BJ (cell line): ENCODE measurements at regions of chr15 and their contacts with region 1.

Region 1: DNA sequence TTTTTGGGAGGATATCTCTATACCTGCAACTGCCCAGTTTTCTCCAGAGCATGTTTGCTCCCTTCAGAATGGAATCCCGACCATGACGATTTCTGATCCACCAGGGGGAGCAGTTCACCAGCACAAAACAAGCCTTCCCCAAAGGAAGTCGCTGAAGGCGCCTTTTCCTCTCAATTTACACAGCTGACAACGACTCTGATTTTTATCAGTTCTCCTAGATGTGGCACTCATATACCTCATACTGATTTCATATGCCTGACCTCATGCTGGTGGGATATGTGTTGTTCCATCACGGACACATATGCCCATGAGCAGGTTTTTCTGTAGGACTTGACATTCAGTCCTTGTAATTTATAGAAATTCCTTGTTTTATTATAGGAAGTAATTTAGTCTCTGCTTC is 1028.2 kb downstream of the MCTP2 start:
- DNase-seq: no peak
- H3K4me3 ChIP-seq: no peak overlapping the region
- H3K27me3 ChIP-seq: no peaks in the 10 kb centered on the region
- CTCF ChIP-seq: peak; percentile 77

Region 2: DNA sequence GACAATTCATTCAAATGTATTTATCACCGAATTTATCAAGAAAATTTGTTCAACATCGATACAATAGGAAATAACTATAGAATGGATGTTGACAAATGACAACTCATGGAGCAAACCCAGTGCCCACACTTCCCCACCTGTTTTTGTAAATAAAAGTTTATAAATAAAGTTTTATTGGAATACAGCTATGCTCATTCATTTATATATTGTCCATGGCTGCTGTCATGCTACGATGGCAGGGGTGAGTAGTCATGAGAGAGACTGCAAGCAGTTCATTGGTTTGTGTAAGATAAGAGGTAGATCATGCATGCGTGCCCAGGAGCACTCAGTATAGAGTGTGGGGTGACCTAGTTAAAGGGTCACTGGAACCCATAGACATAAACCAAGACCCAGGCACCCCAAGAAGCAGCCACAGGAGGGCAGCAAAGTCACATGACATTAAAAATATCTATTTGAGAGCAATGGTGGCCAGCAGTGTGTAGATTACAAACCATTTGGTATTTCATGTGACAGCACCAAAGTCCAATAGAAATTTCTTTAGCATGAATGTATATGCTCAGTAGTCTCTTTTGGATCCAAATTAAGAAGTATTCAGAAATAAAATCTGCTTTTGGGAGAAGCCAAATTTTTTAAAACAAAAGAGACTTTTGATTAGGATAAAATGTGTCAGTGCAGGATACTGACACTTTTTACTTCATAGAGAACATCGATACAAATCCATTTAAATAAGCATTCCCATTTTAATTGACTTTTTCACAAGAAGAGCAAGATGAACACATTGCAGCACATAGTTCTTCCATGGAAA is 233.4 kb before region 1 on chr15:
- CTCF ChIA-PET with region 1: interaction called, 16 read pairs
- POLR2A ChIA-PET with region 1: no interaction called
- DNase-seq: no peak
- H3K4me3 ChIP-seq: no peak overlapping the region
- H3K27me3 ChIP-seq: no peaks in the 10 kb centered on the region
- CTCF ChIP-seq: peak; percentile 85

Region 3: GRCh38 chr15:95152741-95153140 is 106.8 kb before region 1 on chr15:
- CTCF ChIA-PET with region 1: no interaction called
- POLR2A ChIA-PET with region 1: no interaction called
- DNase-seq: no peak
- H3K4me3 ChIP-seq: no peak overlapping the region
- H3K27me3 ChIP-seq: no peaks in the 10 kb centered on the region
- CTCF ChIP-seq: no peak

Region 4: GRCh38 chr15:95287720-95288103 is 28.2 kb after region 1 on chr15:
- CTCF ChIA-PET with region 1: interaction called, 17 read pairs
- POLR2A ChIA-PET with region 1: no interaction called
- DNase-seq: no peak
- H3K4me3 ChIP-seq: no peak overlapping the region
- H3K27me3 ChIP-seq: no peaks in the 10 kb centered on the region
- CTCF ChIP-seq: no peak